H1 (cell line): ENCODE measurements at regions of chrX and their contacts with region 1.

Region 1: DNA sequence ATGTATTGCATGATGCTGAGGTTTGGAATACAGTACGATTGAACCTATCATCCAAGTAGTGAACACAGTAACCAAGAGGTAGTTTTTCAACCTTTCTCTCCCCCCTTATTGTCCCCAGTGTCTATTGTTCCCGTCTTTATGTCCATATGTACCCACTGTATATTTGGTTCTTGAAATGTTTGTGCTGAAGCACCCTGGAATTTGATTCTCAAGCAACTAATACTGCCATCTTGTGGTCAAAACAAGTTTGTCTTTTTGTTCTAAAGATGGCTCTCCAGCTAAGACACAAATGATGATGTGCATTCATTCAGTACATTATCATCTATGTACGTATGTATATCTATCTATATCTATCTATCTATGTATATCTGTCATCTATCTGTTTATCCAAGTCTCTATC is 33.5 kb upstream of the DCX start:
- DNase-seq: no peak
- H3K4me3 ChIP-seq: no peak overlapping the region
- H3K27ac ChIP-seq: no peak overlapping the region
- H3K4me1 ChIP-seq: no peaks in the 10 kb centered on the region
- H3K27me3 ChIP-seq: no peaks in the 10 kb centered on the region
- CTCF ChIP-seq: peak in 2 of 3 experiments; percentile 19 to 34; a peak in 2 of 4 replicates
- EP300 ChIP-seq: no peak
- POLR2A ChIP-seq: no peak
- RAD21 ChIP-seq: peak; percentile 65 to 69

Region 2: DNA sequence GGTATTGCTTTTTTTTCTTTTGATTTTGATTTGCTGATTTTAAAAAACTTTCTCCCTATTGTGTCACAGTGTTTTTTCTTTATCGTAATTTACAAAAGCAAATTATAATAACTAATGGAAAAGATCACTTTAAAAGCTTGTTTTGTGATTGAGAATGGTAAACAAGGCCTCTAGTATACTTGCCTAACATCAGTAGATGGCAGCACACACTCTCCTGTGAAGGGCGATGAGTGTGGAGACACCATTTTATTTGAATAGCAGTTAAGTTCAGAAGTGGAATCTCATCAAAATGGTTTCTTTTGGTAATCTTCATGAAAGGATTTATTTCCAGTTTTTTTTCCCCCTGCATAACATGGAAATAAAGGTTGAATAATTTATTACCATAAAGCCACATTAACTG is 277.2 kb before region 1 on chrX:
- CTCF ChIA-PET with region 1: interaction called, 18 read pairs
- POLR2A ChIA-PET with region 1: no interaction called
- DNase-seq: no peak
- H3K4me3 ChIP-seq: no peak overlapping the region
- H3K27ac ChIP-seq: no peak overlapping the region
- H3K4me1 ChIP-seq: no peaks in the 10 kb centered on the region
- H3K27me3 ChIP-seq: no peaks in the 10 kb centered on the region
- CTCF ChIP-seq: peak in 1 of 3 experiments; percentile 46; a peak in 2 of 4 replicates
- EP300 ChIP-seq: no peak
- POLR2A ChIP-seq: no peak
- RAD21 ChIP-seq: peak; percentile 62 to 70

Region 3: GRCh38 chrX:111360839-111361238 is 84.6 kb before region 1 on chrX:
- CTCF ChIA-PET with region 1: interaction called, 11 read pairs
- POLR2A ChIA-PET with region 1: no interaction called
- DNase-seq: no peak
- H3K4me3 ChIP-seq: no peak overlapping the region
- H3K27ac ChIP-seq: no peak overlapping the region
- H3K4me1 ChIP-seq: no peaks in the 10 kb centered on the region
- H3K27me3 ChIP-seq: no peaks in the 10 kb centered on the region
- CTCF ChIP-seq: peak; percentile 5 to 44 (median 30); a peak in 3 of 4 replicates
- EP300 ChIP-seq: no peak
- POLR2A ChIP-seq: no peak
- RAD21 ChIP-seq: peak; percentile 67 to 75

Region 4: DNA sequence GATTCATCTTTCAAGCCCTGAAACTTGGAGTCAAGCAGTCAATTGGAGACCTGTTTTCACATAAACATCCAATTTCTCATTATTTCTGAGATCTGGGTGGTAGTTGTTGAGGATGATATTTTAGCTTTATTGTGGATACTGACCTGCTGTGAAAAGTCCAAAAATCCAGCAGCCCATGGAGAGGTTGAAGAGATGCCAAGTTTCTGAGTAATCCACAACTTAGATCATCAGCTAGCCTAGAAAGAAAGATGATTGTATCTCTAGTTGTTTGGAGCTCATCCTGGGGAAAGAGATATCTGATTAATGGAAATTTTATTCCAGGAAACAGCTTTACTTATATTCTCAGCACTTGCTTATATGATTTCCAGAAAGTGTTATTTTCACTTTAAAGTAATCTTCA is 15.1 kb after region 1 on chrX:
- CTCF ChIA-PET with region 1: interaction called, 10 read pairs
- POLR2A ChIA-PET with region 1: interaction called, 3 read pairs
- DNase-seq: no peak
- H3K4me3 ChIP-seq: no peak overlapping the region
- H3K27ac ChIP-seq: no peak overlapping the region
- H3K4me1 ChIP-seq: peaks cover 0 to 3% (median 0%) of the 10 kb centered on the region in 4 experiments; a peak in 1 of 7 replicates
- H3K27me3 ChIP-seq: no peaks in the 10 kb centered on the region
- CTCF ChIP-seq: no peak
- EP300 ChIP-seq: no peak
- POLR2A ChIP-seq: no peak
- RAD21 ChIP-seq: no peak